ENCODE measurements at regions of chr12 and their contacts with region 1.

Region 1: DNA sequence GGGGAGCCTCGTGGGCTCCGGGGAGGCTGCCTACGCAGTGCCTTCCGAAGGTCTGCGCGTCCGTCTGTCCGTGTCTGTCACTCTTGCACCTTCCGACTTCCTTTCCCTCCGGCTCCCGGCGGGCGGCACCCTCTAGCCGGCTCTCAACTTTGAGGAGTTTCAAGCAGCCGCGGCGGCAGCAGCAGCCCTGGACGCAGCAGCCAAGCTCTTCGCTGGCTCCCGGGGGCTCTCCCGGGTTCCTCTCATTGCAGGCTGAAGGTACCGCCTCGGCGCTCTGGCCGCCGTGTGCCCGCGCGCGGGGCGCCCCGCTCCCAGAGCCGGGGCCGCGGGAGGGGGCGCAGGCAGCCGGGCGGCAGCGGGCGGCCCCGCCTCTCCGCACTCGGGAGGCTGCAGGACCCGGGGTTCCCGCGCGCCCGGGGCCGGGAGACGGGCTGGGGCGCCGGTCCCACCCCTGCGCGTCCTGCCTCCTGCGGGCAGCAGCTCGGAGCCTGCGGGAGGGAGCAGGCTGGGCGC is at the starts of genes AMIGO2 and PCED1B:
- DNase-seq: peak; percentile 85
- ATAC-seq: peak; percentile 59
- H3K4me3 Mint-ChIP-seq: peak within 1 kb of the TSS; percentile 96
- H3K27ac Mint-ChIP-seq: peak within 1 kb of the TSS; percentile 96
- H3K4me1 Mint-ChIP-seq: peaks cover 73% of the 10 kb centered on the region
- H3K27me3 Mint-ChIP-seq: no peaks in the 10 kb centered on the region
- total RNA-seq, gene AMIGO2: 15.1 to 17.1 TPM
- total RNA-seq, gene PCED1B: 76.3 to 82.3 TPM

Region 2: GRCh38 chr12:46886541-46887041 is 192.9 kb before region 1 on chr12:
- CTCF ChIA-PET with region 1: no interaction called
- POLR2A ChIA-PET with region 1: no interaction called
- intact Hi-C with region 1: no loop called
- DNase-seq: no peak
- ATAC-seq: no peak
- H3K4me3 Mint-ChIP-seq: no peak overlapping the region
- H3K27ac Mint-ChIP-seq: no peak overlapping the region
- H3K4me1 Mint-ChIP-seq: no peaks in the 10 kb centered on the region
- H3K27me3 Mint-ChIP-seq: peaks cover 3% of the 10 kb centered on the region

Region 3: DNA sequence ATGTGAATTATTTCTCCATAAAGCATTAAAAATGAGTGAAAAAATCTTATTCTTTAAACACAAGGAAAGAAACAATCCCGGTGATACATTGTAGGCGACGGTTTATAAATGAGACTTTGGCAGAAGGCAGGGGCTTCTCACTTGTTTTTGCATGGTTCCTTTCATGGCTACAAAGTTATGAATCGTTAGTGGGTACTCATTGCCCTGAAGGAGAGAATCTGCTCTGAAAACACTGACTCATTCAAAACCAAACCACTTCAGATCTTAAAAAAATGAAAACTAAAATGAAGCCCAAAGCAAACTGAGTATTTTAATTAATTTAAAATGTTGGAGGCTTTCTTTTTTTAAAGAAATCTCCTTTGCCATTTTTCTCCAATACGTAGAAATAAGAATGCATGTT is 41.6 kb after region 1 on chr12:
- CTCF ChIA-PET with region 1: interaction called, 3 read pairs
- POLR2A ChIA-PET with region 1: interaction called, 4 read pairs
- intact Hi-C with region 1: loop called (anchors 2 to 5 kb)
- DNase-seq: no peak
- ATAC-seq: peak; percentile 93
- H3K4me3 Mint-ChIP-seq: peak overlapping the region; percentile 38
- H3K27ac Mint-ChIP-seq: peak overlapping the region; percentile 86
- H3K4me1 Mint-ChIP-seq: peaks cover 30% of the 10 kb centered on the region
- H3K27me3 Mint-ChIP-seq: no peaks in the 10 kb centered on the region

Region 4: GRCh38 chr12:47207340-47207717 is 127.8 kb after region 1 on chr12:
- CTCF ChIA-PET with region 1: interaction called, 12 read pairs
- POLR2A ChIA-PET with region 1: interaction called, 7 read pairs
- intact Hi-C with region 1: loop called in 1 of 2 experiments (anchors 1 kb)
- DNase-seq: peak; percentile 71
- ATAC-seq: peak; percentile 54
- H3K4me3 Mint-ChIP-seq: peak overlapping the region; percentile 54
- H3K27ac Mint-ChIP-seq: peak overlapping the region; percentile 92
- H3K4me1 Mint-ChIP-seq: peaks cover 78% of the 10 kb centered on the region
- H3K27me3 Mint-ChIP-seq: no peaks in the 10 kb centered on the region

Region 5: DNA sequence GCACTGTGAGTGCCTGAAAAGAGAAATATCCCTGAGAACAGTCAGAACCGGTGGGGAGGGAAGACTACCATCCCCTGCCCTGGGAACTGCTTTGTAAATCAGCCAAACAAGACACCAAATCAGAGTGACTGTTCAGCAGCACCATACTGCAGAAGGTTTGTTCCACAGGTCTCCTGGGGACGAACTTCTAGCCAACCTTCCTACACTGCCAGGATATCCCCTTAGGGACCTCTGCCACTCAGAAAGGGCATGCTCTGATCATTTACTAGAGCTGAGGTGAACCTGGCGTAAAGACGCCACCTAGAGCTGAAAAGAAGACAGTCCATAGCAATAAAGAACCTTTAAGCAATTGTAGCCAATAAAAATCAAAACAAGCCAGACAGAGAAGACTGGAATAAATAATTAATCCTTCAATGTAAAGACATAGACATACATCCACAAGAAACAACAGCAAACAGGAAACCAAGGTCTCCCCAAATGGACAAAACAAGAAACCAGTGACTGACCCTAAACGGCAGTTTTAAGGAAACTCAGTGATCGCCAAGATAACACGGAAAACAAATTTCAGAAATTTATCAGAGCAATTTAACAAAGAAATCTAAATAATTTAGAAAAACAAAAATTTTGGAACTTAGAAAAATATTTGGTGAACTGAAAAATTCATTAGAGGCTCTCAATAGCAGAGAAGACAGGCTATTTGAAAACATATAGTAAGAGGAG is 228.3 kb after region 1 on chr12:
- CTCF ChIA-PET with region 1: no interaction called
- POLR2A ChIA-PET with region 1: no interaction called
- intact Hi-C with region 1: loop called (anchors 1 to 2 kb)
- DNase-seq: peak; percentile 73
- ATAC-seq: peak; percentile 84
- H3K4me3 Mint-ChIP-seq: peak overlapping the region; percentile 77
- H3K27ac Mint-ChIP-seq: peak overlapping the region; percentile 96
- H3K4me1 Mint-ChIP-seq: peaks cover 70% of the 10 kb centered on the region
- H3K27me3 Mint-ChIP-seq: no peaks in the 10 kb centered on the region

Region 6: DNA sequence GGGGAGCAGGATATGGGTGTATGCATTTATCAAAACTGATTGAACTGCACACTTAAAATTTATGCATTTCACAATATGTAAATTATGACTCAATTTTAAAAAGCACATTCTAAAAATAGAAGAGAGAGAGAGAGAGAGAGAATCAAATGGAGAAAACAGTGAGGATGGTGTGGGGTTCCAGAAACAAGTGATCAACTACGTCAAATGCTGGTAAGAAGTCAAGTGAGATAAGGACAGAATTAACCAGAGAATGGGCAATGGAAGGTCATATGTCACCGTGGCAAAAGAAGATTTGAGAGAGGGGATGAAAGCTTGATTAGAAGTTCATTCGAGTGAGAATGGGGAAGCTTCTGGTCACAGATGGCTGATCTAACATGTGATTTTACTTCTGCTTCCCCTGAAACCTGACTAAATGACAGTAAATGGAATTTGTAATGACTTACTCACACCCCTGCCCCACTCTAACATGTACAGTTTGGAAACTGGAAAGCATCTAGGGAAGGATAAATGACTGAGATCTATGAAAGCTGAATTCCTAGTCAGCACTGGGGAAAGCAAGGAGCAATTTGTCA is 276.7 kb after region 1 on chr12:
- CTCF ChIA-PET with region 1: no interaction called
- POLR2A ChIA-PET with region 1: no interaction called
- intact Hi-C with region 1: loop called (anchors 2 to 5 kb)
- DNase-seq: peak; percentile 61
- ATAC-seq: peak; percentile 74
- H3K4me3 Mint-ChIP-seq: peak overlapping the region; percentile 58
- H3K27ac Mint-ChIP-seq: peak overlapping the region; percentile 100
- H3K4me1 Mint-ChIP-seq: peaks cover 86% of the 10 kb centered on the region
- H3K27me3 Mint-ChIP-seq: no peaks in the 10 kb centered on the region

Region 7: GRCh38 chr12:47574252-47575021 is 494.9 kb after region 1 on chr12:
- CTCF ChIA-PET with region 1: no interaction called
- POLR2A ChIA-PET with region 1: no interaction called
- intact Hi-C with region 1: loop called in 1 of 2 experiments (anchors 5 kb)
- DNase-seq: no peak
- ATAC-seq: peak; percentile 96
- H3K4me3 Mint-ChIP-seq: no peak overlapping the region
- H3K27ac Mint-ChIP-seq: peak overlapping the region; percentile 94
- H3K4me1 Mint-ChIP-seq: peaks cover 28% of the 10 kb centered on the region
- H3K27me3 Mint-ChIP-seq: no peaks in the 10 kb centered on the region